Aorta (tissue), 5 donors: ENCODE measurements at regions of chr2 and their contacts with region 1.

Region 1: GRCh38 chr2:221272729-221273128 is 299.4 kb downstream of the EPHA4 start:
- DNase-seq: no peak
- ATAC-seq: no peak
- H3K4me3 ChIP-seq: no peak overlapping the region
- H3K27ac ChIP-seq: no peak overlapping the region
- H3K4me1 ChIP-seq: no peaks in the 10 kb centered on the region
- H3K27me3 ChIP-seq: no peaks in the 10 kb centered on the region

Region 2: GRCh38 chr2:221203125-221203524 is 69.6 kb before region 1 on chr2:
- intact Hi-C with region 1: loop called in 1 of 2 experiments (anchors 2 kb)
- DNase-seq: no peak
- ATAC-seq: no peak
- H3K4me3 ChIP-seq: no peak overlapping the region
- H3K27ac ChIP-seq: no peak overlapping the region
- H3K4me1 ChIP-seq: no peaks in the 10 kb centered on the region
- H3K27me3 ChIP-seq: no peaks in the 10 kb centered on the region